A673 (cell line): ENCODE measurements at regions of chr7 and their contacts with region 1.

Region 1: GRCh38 chr7:30503274-30504212 is 1.1 kb downstream of the GGCT start:
- DNase-seq: no peak
- H3K4me3 ChIP-seq: peak overlapping the region; percentile 81
- H3K27ac ChIP-seq: peak overlapping the region; percentile 80
- H3K4me1 ChIP-seq: no peaks in the 10 kb centered on the region
- H3K27me3 ChIP-seq: no peaks in the 10 kb centered on the region
- CTCF ChIP-seq: no peak

Region 2: DNA sequence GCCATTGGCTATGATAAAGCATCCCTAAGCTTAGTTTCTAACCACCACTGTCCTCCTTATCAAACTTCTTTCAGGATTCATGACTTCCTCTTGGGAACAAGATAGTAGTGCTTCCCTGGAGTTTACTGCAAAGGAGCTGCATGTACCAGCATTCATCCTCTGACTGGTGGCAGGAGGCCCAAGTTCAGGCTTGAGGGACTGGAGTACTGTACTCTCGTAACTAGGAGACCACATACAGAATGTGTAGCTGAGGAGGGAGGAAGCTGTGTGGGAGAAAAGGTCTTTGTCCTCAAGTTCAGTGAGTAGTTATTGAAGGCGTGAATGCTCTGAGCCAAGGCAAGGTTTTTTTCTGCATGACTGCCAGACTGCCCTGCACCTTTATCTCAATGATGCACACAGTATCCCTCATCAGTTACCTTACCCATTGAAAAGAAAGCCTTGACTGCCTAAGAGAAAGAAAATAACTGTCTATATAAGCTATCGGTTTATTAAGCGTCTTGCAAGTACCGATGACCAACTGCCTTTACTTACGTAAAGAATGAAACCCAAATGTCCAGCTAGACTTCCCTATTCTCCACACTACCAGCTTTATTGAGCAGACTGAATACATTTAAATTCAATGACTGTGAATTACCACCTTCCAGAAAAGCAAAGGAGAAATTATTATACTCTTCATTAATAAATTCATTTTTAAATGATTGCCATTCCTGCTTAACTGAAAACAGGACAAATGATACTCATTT is 526.7 kb before region 1 on chr7:
- CTCF ChIA-PET with region 1: no interaction called
- POLR2A ChIA-PET with region 1: no interaction called
- intact Hi-C with region 1: no loop called
- DNase-seq: no peak
- H3K4me3 ChIP-seq: no peak overlapping the region
- H3K27ac ChIP-seq: no peak overlapping the region
- H3K4me1 ChIP-seq: peaks cover 24% of the 10 kb centered on the region
- H3K27me3 ChIP-seq: no peaks in the 10 kb centered on the region
- CTCF ChIP-seq: no peak

Region 3: GRCh38 chr7:30310674-30311362 is 192.7 kb before region 1 on chr7:
- CTCF ChIA-PET with region 1: no interaction called
- POLR2A ChIA-PET with region 1: interaction called, 19 read pairs
- intact Hi-C with region 1: no loop called
- DNase-seq: no peak
- H3K4me3 ChIP-seq: no peak overlapping the region
- H3K27ac ChIP-seq: no peak overlapping the region
- H3K4me1 ChIP-seq: peaks cover 20% of the 10 kb centered on the region
- H3K27me3 ChIP-seq: no peaks in the 10 kb centered on the region
- CTCF ChIP-seq: no peak